ENCODE measurements at regions of chr1 and their contacts with region 1.

Region 1: DNA sequence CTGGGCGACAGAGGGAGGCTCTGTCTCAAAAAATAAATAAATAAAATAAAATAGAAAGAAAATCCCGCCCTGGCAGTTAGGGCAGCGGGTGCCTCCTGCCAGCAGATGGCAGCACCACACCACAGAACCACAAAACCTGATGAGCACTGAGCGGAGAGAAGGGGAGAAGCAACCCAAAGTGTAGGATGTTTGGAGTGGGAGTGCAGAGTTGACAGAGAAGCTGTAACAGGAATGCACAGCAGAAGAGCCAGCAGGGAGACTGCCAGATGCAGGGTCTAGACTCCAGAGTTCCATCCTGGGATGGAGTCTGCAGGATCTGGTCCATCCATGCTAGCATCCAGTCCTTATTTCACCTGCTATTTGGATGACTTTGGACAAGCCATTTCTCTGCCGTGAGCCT is 29.7 kb upstream of the KIRREL1 start:
- DNase-seq: peak; percentile 63
- H3K4me3 ChIP-seq: peak overlapping the region in 1 of 2 experiments; percentile 40; a peak in 2 of 4 replicates
- H3K27ac ChIP-seq: no peak overlapping the region
- H3K4me1 ChIP-seq: peaks cover 5 to 21% of the 10 kb centered on the region in 2 experiments; a peak in 3 of 4 replicates
- H3K27me3 ChIP-seq: peaks cover 26% of the 10 kb centered on the region
- CTCF ChIP-seq: peak; percentile 98
- EP300 ChIP-seq: no peak
- RAD21 ChIP-seq: peak; percentile 81

Region 2: GRCh38 chr1:157932069-157932468 is 31.6 kb before region 1 on chr1:
- CTCF ChIA-PET with region 1: no interaction called
- POLR2A ChIA-PET with region 1: no interaction called
- DNase-seq: no peak
- H3K4me3 ChIP-seq: no peak overlapping the region
- H3K27ac ChIP-seq: no peak overlapping the region
- H3K4me1 ChIP-seq: no peaks in the 10 kb centered on the region
- H3K27me3 ChIP-seq: peaks cover 23% of the 10 kb centered on the region; the same call in 1 of the 2 replicates
- CTCF ChIP-seq: no peak
- EP300 ChIP-seq: no peak
- RAD21 ChIP-seq: no peak

Region 3: DNA sequence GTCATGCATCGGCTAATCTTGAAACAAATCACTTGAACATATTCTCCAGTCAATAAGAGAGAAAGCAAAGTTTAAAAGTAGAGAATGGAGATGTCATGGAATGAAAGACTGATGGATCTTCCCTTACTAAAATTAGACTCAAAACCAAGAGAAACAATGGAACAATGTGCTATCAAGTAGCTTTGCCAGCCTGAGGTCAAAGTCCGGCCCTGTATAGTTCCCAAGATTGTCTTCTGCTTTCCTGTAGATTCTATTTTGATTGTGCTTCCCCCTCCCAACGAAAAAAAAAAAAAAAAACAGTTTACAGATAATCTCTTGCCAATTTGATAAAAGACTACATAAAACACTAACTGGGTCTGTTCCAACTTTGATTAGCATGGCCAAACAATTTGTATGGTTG is 11.1 kb before region 1 on chr1:
- CTCF ChIA-PET with region 1: interaction called, 12 read pairs
- POLR2A ChIA-PET with region 1: no interaction called
- DNase-seq: no peak
- H3K4me3 ChIP-seq: no peak overlapping the region
- H3K27ac ChIP-seq: no peak overlapping the region
- H3K4me1 ChIP-seq: no peaks in the 10 kb centered on the region
- H3K27me3 ChIP-seq: peaks cover 85% of the 10 kb centered on the region
- CTCF ChIP-seq: no peak
- EP300 ChIP-seq: no peak
- RAD21 ChIP-seq: no peak

Region 4: GRCh38 chr1:158000507-158000906 is 36.8 kb after region 1 on chr1:
- CTCF ChIA-PET with region 1: no interaction called
- POLR2A ChIA-PET with region 1: no interaction called
- DNase-seq: no peak
- H3K4me3 ChIP-seq: no peak overlapping the region; a peak in 1 of 4 replicates
- H3K27ac ChIP-seq: peak overlapping the region in 1 of 2 experiments; percentile 89; a peak in 2 of 4 replicates
- H3K4me1 ChIP-seq: peaks cover 21 to 84% of the 10 kb centered on the region in 2 experiments
- H3K27me3 ChIP-seq: no peaks in the 10 kb centered on the region
- CTCF ChIP-seq: no peak
- EP300 ChIP-seq: no peak
- RAD21 ChIP-seq: no peak

Region 5: DNA sequence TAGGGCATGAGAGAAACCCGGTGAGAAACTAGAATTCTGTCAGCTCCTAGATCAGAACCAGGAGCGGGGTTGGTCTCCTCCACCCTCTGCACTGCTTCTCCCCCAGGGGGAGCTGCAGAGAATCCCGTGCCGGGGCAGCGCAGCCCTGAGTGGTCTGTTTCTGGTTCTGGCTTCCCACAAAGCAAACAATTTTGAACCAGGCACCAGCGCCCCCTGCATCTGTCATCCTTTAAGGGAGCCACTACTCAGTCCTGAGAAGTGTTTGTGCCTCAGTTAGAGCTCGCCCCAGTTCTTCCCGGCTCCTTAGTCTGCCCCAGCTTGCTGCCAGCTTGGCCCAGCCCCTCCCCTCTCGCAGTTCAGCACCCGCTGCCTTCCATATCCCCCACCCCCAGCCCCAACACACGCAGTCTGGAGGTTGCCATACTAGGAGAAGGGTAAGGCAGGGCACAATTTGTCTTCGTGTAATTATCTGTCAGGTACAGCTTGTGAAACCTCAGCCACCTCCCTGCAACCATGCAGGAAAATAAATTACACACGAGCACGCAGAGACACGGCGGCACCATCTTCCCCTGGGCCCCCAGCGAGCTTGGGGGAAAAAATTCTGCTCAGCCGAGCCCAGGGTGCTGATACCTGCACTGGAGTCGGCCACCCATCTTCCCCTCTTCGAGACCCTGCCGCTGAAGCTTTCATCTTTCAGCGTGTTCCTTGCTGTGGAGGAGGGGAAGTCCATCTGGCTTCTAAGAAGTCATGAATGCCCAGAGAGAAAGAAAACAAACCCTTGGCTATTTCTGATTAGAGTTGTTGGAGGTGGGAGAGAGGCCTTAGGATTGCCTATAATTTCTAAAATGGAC is 154.4 kb after region 1 on chr1:
- CTCF ChIA-PET with region 1: interaction called, 32 read pairs
- POLR2A ChIA-PET with region 1: no interaction called
- DNase-seq: peak; percentile 47
- H3K4me3 ChIP-seq: peak overlapping the region; percentile 23 to 45; a peak in 2 of 4 replicates
- H3K27ac ChIP-seq: no peak overlapping the region
- H3K4me1 ChIP-seq: peaks cover 0 to 44% of the 10 kb centered on the region in 2 experiments; a peak in 1 of 4 replicates
- H3K27me3 ChIP-seq: no peaks in the 10 kb centered on the region; the same call in 1 of the 2 replicates
- CTCF ChIP-seq: peak; percentile 63
- EP300 ChIP-seq: no peak
- RAD21 ChIP-seq: peak; percentile 16; the same call in 1 of the 2 replicates

Measured in SK-N-SH (cell line).